K562 (cell line): ENCODE measurements at regions of chr7 and their contacts with region 1.

Region 1: GRCh38 chr7:26216049-26216448 is 14.5 kb downstream of the CBX3 start:
- DNase-seq: no peak
- ATAC-seq: no peak
- H3K4me3 ChIP-seq: no peak overlapping the region
- H3K27ac ChIP-seq: no peak overlapping the region
- H3K4me1 ChIP-seq: no peaks in the 10 kb centered on the region; a peak in 2 of 5 replicates
- H3K27me3 ChIP-seq: no peaks in the 10 kb centered on the region
- CTCF ChIP-seq: no peak
- EP300 ChIP-seq: no peak
- POLR2A ChIP-seq: no peak
- RAD21 ChIP-seq: no peak

Region 2: GRCh38 chr7:26233902-26234511 is 18.0 kb after region 1 on chr7:
- CTCF ChIA-PET with region 1: no interaction called
- POLR2A ChIA-PET with region 1: interaction called, 16 read pairs
- in situ Hi-C with region 1: no loop called
- intact Hi-C with region 1: no loop called
- DNase-seq: peak; percentile 67 to 88 (median 76)
- ATAC-seq: peak; percentile 90
- H3K4me3 ChIP-seq: no peak overlapping the region
- H3K27ac ChIP-seq: peak overlapping the region; percentile 92
- H3K4me1 ChIP-seq: peaks cover 12 to 34% of the 10 kb centered on the region in 2 experiments; a peak in 4 of 5 replicates
- H3K27me3 ChIP-seq: no peaks in the 10 kb centered on the region
- CTCF ChIP-seq: peak; percentile 20 to 57 (median 41); a peak in 3 of 6 replicates
- EP300 ChIP-seq: peak; percentile 77
- POLR2A ChIP-seq: peak; percentile 49; the same call in 1 of the 2 replicates
- RAD21 ChIP-seq: peak in 1 of 2 experiments; percentile 27; a peak in 3 of 4 replicates